Posterior cingulate gyrus (tissue), 11 donors: ENCODE measurements at regions of chr2 and their contacts with region 1.

Region 1: DNA sequence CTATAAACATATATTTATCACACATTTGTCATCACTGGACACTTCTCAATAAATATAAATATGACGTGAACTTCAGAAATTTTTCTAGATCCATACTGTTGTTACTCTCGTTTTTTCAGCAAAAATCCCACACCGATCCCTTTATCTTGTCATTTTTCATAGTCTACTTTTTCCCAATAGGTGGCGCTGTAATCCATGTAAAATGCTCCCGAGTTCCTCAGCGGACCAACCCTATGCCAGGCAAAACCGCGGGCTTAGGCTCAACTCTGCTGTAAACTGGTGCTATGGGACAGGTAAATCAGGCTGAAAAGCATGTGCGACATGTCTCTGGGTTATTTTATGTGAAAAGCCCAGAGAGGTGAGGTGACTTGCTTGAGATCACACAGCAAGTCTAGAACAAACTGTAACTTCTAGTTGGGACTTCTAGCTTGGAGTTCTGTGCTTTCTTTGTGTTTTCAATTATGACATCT is 104.0 kb downstream of the COBLL1 start:
- DNase-seq: peak in 8 of 10 donors; percentile 15 to 85 (median 30)

Region 2: GRCh38 chr2:164841719-164842623 is 104.3 kb after region 1 on chr2 and contains the start of gene COBLL1:
- intact Hi-C with region 1: loop called (anchors 10 kb)
- DNase-seq: peak; percentile 24 to 90 (median 54)

Region 3: GRCh38 chr2:164917296-164917903 is 179.8 kb after region 1 on chr2:
- intact Hi-C with region 1: loop called (anchors 5 kb)
- DNase-seq: peak in 3 of 10 donors; percentile 12 to 67 (median 17)